SK-N-SH (cell line): ENCODE measurements at regions of chr19 and their contacts with region 1.

Region 1: DNA sequence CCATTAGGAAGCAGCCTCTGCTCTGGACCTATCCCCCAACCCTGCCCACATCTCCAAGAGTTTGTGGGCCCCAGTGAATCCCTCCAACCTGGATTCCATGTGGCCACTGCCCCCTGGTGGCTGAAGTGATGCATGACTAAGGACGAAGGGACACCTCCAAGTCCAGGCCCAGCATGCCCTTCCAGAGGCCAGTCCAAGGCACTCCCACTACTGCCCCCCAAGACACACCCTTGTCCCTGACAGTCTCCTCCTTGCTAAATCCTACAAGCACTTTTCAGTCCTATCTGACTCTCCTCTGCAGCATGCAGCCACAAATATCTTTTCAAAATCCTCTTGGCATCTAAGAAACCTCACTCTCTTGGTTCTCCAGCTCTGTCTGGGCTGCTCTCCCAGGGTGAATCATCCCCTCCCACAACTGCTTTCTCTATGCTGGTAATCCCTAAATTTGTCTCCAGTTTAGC is 33.0 kb downstream of the DEDD2 start:
- DNase-seq: peak; percentile 85
- H3K4me3 ChIP-seq: no peak overlapping the region; a peak in 1 of 4 replicates
- H3K27ac ChIP-seq: no peak overlapping the region
- H3K4me1 ChIP-seq: no peaks in the 10 kb centered on the region
- H3K27me3 ChIP-seq: peaks cover 5% of the 10 kb centered on the region; the same call in 1 of the 2 replicates
- CTCF ChIP-seq: peak; percentile 89
- EP300 ChIP-seq: no peak
- RAD21 ChIP-seq: peak; percentile 92

Region 2: GRCh38 chr19:42121656-42122069 is 62.8 kb before region 1 on chr19:
- CTCF ChIA-PET with region 1: interaction called, 18 read pairs
- POLR2A ChIA-PET with region 1: no interaction called
- DNase-seq: no peak
- H3K4me3 ChIP-seq: no peak overlapping the region
- H3K27ac ChIP-seq: peak overlapping the region in 1 of 2 experiments; percentile 81; a peak in 2 of 4 replicates
- H3K4me1 ChIP-seq: peaks cover 7 to 26% of the 10 kb centered on the region in 2 experiments; a peak in 3 of 4 replicates
- H3K27me3 ChIP-seq: no peaks in the 10 kb centered on the region
- CTCF ChIP-seq: no peak
- EP300 ChIP-seq: peak in 1 of 2 experiments; percentile 80; a peak in 1 of 4 replicates
- RAD21 ChIP-seq: no peak

Region 3: GRCh38 chr19:42140125-42140754 is 44.2 kb before region 1 on chr19:
- CTCF ChIA-PET with region 1: interaction called, 177 read pairs
- POLR2A ChIA-PET with region 1: no interaction called
- DNase-seq: no peak
- H3K4me3 ChIP-seq: no peak overlapping the region
- H3K27ac ChIP-seq: no peak overlapping the region
- H3K4me1 ChIP-seq: peaks cover 0 to 16% of the 10 kb centered on the region in 2 experiments; a peak in 1 of 4 replicates
- H3K27me3 ChIP-seq: peaks cover 4% of the 10 kb centered on the region
- CTCF ChIP-seq: no peak
- EP300 ChIP-seq: no peak
- RAD21 ChIP-seq: no peak

Region 4: DNA sequence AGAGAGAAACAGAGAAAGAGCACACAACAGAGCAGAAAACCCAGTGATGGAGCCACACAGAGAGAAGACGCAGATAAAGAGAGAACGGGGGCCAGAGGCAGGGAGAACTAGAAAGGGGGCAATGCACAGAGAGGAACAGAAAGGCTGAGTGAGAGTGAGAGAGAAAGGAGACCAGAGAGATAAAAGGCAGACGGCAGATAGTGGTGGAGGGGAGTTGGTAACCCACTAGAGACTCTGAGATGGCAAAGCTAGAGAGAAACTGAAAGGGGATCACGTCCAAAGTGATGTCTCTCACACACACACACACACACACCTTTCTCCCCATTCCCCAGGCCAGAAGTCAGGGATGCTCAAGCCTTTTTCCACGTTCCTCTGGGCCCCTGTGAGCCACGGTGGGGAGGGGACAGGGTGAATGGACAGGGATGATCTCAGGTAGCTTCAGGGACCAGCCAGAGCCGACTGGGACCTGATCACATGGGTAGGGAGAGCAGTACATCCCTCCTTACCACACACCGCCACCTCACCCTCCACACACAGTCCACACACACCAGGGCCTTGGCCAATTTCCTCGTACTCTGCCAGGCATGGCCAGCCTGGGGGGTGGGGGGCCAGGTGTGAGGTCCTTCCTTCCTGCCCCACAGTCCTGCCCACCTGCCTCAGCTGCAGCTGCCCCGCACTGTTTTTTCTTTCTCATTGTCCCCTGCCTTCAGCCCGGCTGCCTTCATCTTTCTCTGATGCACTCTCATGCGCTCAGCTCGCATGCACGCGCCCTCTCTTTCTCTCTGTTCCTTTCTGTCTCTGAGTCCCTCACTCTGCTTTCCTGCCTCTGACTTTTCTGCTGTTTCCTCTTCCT is 29.7 kb before region 1 on chr19:
- CTCF ChIA-PET with region 1: interaction called, 11 read pairs
- POLR2A ChIA-PET with region 1: no interaction called
- DNase-seq: peak; percentile 41
- H3K4me3 ChIP-seq: no peak overlapping the region
- H3K27ac ChIP-seq: no peak overlapping the region
- H3K4me1 ChIP-seq: peaks cover 0 to 16% of the 10 kb centered on the region in 2 experiments; a peak in 1 of 4 replicates
- H3K27me3 ChIP-seq: peaks cover 38% of the 10 kb centered on the region
- CTCF ChIP-seq: no peak
- EP300 ChIP-seq: no peak
- RAD21 ChIP-seq: no peak